Mammary epithelial cell (primary cell): ENCODE measurements at regions of chr10 and their contacts with region 1.

Region 1: DNA sequence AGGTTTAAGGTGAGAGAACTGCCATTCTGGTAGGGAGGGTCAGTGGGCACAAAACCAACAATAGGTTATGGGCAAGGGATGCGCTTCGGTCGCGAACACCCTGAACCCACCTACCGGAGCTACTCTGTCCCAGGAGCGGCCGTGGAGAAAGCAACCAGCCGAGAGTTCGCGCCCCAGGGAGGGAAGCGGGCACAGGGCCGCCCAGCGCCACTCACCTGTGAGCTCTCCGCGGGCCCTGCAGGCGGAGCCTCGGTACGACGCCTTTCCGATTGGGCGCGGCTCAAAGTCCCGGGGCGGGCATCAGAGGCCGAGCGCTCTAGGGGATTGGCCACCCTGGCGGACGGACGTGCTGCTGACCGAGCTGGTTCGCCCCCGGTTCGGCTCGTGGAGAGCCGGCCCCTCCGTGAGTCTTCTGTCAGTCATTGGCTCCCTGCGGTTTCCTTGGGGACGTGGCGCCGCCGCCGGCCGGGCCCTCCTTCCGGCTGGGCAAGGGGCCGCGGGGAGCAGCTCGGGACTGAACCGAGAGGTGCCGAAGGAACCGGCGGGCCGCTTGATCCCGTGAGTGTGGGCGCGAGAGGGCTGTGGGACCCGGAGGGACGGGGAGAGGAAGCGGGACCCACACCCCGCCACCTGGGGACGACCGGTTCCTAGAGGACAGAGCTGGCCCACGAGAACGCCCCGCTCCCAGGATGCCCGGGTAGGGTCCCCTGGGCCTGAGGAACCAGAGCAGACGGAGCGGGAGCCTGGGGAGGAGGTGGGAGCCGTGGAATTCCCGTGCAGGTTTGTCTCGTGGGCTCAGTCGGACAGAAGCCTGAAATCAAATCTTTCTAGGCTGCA is at the start of gene ENTPD7:
- DNase-seq: peak; percentile 98
- H3K4me3 ChIP-seq: peak within 1 kb of the TSS; percentile 84 to 97 (median 94)
- H3K27ac ChIP-seq: peak within 1 kb of the TSS; percentile 95
- H3K4me1 ChIP-seq: peaks cover 64% of the 10 kb centered on the region
- H3K27me3 ChIP-seq: no peaks in the 10 kb centered on the region
- CTCF ChIP-seq: peak in 1 of 2 donors; percentile 27
- total RNA-seq, gene ENTPD7: 23.2 to 47.2 TPM

Region 2: GRCh38 chr10:99685597-99685967 is 26.3 kb after region 1 on chr10:
- CTCF ChIA-PET with region 1: no interaction called
- dilution Hi-C with region 1: no loop called
- in situ Hi-C with region 1: no loop called
- intact Hi-C with region 1: loop called (anchors 1 kb)
- DNase-seq: peak; percentile 96
- H3K4me3 ChIP-seq: no peak overlapping the region
- H3K27ac ChIP-seq: peak overlapping the region; percentile 64
- H3K4me1 ChIP-seq: peaks cover 69% of the 10 kb centered on the region
- H3K27me3 ChIP-seq: no peaks in the 10 kb centered on the region
- CTCF ChIP-seq: no peak